Caco-2 (cell line): ENCODE measurements at regions of chr2 and their contacts with region 1.

Region 1: GRCh38 chr2:39593439-39594393 is 72.0 kb upstream of the TMEM178A start:
- DNase-seq: peak; percentile 53 to 65
- H3K4me3 ChIP-seq: no peak overlapping the region
- H3K4me3 Mint-ChIP-seq: no peak overlapping the region
- H3K27ac Mint-ChIP-seq: no peak overlapping the region
- H3K4me1 ChIP-seq: no peaks in the 10 kb centered on the region
- H3K4me1 Mint-ChIP-seq: no peaks in the 10 kb centered on the region
- H3K27me3 ChIP-seq: no peaks in the 10 kb centered on the region
- H3K27me3 Mint-ChIP-seq: no peaks in the 10 kb centered on the region
- CTCF ChIP-seq: peak; percentile 54 to 73

Region 2: DNA sequence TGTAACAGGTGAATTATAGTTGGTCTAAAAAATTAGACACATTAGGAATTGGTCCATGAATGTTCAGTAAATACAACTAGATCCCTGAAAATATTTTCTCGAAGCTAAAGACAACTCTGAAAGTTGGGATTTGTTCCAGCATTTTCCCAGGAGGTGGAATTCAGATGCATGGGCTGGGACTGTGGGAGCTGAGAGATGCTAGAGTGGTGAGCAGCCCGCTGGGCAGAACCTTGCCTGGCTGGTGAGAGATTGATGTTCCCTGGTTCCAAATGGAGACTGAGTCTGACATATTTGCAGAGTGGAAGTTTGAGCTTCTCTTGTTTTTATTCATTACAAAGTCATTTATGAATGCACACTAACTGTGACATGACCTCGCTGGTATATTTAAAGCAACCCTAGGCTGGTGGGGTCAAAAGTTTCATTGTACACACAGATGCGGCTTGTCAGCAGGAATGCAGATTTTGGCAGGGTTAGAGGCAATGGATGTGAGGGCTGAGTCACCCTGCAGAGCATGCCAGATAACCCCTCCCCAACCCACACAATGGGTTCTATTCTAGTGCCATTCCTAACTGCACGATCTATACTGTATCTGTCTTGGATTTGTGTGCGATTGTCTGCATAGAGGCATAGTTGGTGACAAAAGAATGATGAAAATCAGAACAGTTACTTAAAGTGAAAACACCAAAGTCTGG is 48.5 kb after region 1 on chr2:
- CTCF ChIA-PET with region 1: no interaction called
- POLR2A ChIA-PET with region 1: no interaction called
- intact Hi-C with region 1: no loop called
- DNase-seq: no peak
- H3K4me3 ChIP-seq: no peak overlapping the region
- H3K4me3 Mint-ChIP-seq: no peak overlapping the region
- H3K27ac Mint-ChIP-seq: no peak overlapping the region
- H3K4me1 ChIP-seq: no peaks in the 10 kb centered on the region
- H3K4me1 Mint-ChIP-seq: no peaks in the 10 kb centered on the region
- H3K27me3 ChIP-seq: no peaks in the 10 kb centered on the region
- H3K27me3 Mint-ChIP-seq: no peaks in the 10 kb centered on the region
- CTCF ChIP-seq: no peak

Region 3: GRCh38 chr2:39696838-39697237 is 103.1 kb after region 1 on chr2:
- CTCF ChIA-PET with region 1: interaction called, 3 read pairs
- POLR2A ChIA-PET with region 1: no interaction called
- intact Hi-C with region 1: loop called (anchors 5 kb)
- DNase-seq: no peak
- H3K4me3 ChIP-seq: no peak overlapping the region
- H3K4me3 Mint-ChIP-seq: no peak overlapping the region
- H3K27ac Mint-ChIP-seq: no peak overlapping the region
- H3K4me1 ChIP-seq: no peaks in the 10 kb centered on the region
- H3K4me1 Mint-ChIP-seq: no peaks in the 10 kb centered on the region
- H3K27me3 ChIP-seq: no peaks in the 10 kb centered on the region; the same call in 1 of the 2 replicates
- H3K27me3 Mint-ChIP-seq: peaks cover 14% of the 10 kb centered on the region
- CTCF ChIP-seq: no peak